HepG2 (cell line): ENCODE measurements at regions of chrX and their contacts with region 1.

Region 1: DNA sequence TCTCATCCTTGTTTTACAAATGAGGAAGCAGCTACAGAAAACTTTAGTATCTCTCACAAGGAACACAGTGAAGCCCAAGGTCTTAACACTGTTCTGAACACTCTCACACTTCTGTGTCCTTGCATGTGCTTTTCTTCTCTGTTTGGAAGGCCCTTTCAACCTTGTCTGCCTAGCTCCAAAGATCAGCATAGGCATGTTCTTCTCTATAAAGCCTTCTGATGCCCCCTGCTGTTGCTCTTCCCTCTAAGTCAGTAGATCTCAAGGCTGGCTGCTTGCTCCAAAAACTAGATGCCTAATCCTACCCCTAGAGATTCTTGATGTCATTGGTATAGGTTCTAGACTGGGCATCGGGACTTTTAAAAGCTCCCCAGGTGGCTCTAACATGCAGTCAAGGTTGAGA is 5.9 kb downstream of the APOO start:
- DNase-seq: peak; percentile 77
- ATAC-seq: peak; percentile 96
- H3K4me3 ChIP-seq: peak overlapping the region in 1 of 3 experiments; percentile 33; a peak in 1 of 6 replicates
- H3K27ac ChIP-seq: peak overlapping the region; percentile 64
- H3K4me1 ChIP-seq: peaks cover 66% of the 10 kb centered on the region
- H3K27me3 ChIP-seq: no peaks in the 10 kb centered on the region
- CTCF ChIP-seq: peak; percentile 82
- EP300 ChIP-seq: no peak
- POLR2A ChIP-seq: no peak
- RAD21 ChIP-seq: peak; percentile 81

Region 2: GRCh38 chrX:23694606-23695005 is 207.2 kb before region 1 on chrX:
- CTCF ChIA-PET with region 1: interaction called, 32 read pairs
- POLR2A ChIA-PET with region 1: interaction called, 3 read pairs
- in situ Hi-C with region 1: loop called (anchors 5 kb)
- intact Hi-C with region 1: loop called (anchors 1 kb)
- DNase-seq: peak; percentile 39
- ATAC-seq: peak; percentile 81
- H3K4me3 ChIP-seq: no peak overlapping the region
- H3K27ac ChIP-seq: no peak overlapping the region
- H3K4me1 ChIP-seq: no peaks in the 10 kb centered on the region
- H3K27me3 ChIP-seq: no peaks in the 10 kb centered on the region
- CTCF ChIP-seq: peak; percentile 63
- EP300 ChIP-seq: no peak
- POLR2A ChIP-seq: no peak
- RAD21 ChIP-seq: no peak

Region 3: DNA sequence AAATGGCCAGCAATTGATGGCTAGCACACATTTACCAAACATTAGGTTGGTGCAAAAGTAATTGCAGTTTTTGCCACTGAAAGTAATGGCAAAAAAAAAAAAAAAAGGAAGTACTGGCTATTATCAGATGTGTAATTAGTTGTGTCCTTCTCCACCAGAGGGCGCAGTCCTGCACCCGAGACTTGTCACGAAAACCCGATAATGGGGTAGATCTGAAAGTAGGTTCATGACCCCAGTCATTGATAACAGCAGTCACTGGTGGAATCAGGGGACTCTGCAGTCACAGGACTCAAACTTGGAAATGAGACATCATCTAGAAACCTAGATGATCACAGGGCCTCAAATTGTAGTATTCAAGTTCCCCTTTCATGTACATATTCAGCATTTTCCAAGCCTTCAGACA is 145.6 kb before region 1 on chrX:
- CTCF ChIA-PET with region 1: interaction called, 50 read pairs
- POLR2A ChIA-PET with region 1: no interaction called
- in situ Hi-C with region 1: loop called (anchors 5 kb)
- intact Hi-C with region 1: loop called (anchors 1 kb)
- DNase-seq: peak; percentile 37
- ATAC-seq: no peak; the same call in 2 of the 3 replicates
- H3K4me3 ChIP-seq: no peak overlapping the region
- H3K27ac ChIP-seq: no peak overlapping the region
- H3K4me1 ChIP-seq: no peaks in the 10 kb centered on the region
- H3K27me3 ChIP-seq: no peaks in the 10 kb centered on the region
- CTCF ChIP-seq: peak; percentile 64
- EP300 ChIP-seq: no peak
- POLR2A ChIP-seq: no peak
- RAD21 ChIP-seq: no peak

Region 4: DNA sequence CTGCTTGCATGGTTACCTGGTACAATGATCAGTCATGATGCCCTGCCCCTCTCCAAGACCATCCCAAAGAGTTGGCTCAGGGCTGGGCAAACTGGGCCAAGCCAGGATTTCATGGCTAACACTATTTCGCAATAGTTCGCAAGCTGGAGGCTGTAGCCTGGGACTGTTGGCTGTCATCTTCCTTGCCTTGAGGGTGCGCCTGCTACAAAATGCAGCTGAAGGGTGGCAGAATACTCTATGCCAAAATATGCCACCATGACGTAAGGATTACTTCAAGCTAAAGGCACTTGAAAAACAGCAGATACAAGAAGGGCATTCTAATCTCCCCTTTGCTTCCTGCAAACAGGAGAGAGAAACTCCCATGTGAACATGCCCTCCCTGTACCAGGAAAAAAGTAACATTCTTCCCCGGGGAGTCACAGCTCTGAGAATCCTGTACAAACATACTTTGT is 97.8 kb before region 1 on chrX:
- CTCF ChIA-PET with region 1: no interaction called
- POLR2A ChIA-PET with region 1: interaction called, 13 read pairs
- in situ Hi-C with region 1: no loop called
- intact Hi-C with region 1: loop called (anchors 1 kb)
- DNase-seq: peak; percentile 70
- ATAC-seq: peak; percentile 30; the same call in 2 of the 3 replicates
- H3K4me3 ChIP-seq: no peak overlapping the region
- H3K27ac ChIP-seq: peak overlapping the region; percentile 65
- H3K4me1 ChIP-seq: peaks cover 46% of the 10 kb centered on the region
- H3K27me3 ChIP-seq: no peaks in the 10 kb centered on the region
- CTCF ChIP-seq: no peak
- EP300 ChIP-seq: 0 out of 4 replicates have a peak, but pooled peaks of 1 of the 2 experiments have one; percentile 9
- POLR2A ChIP-seq: no peak
- RAD21 ChIP-seq: no peak

Region 5: GRCh38 chrX:23844502-23845138 is 57.2 kb before region 1 on chrX:
- CTCF ChIA-PET with region 1: no interaction called
- POLR2A ChIA-PET with region 1: interaction called, 4 read pairs
- in situ Hi-C with region 1: no loop called
- intact Hi-C with region 1: loop called (anchors 5 kb)
- DNase-seq: peak; percentile 65
- ATAC-seq: peak; percentile 63
- H3K4me3 ChIP-seq: peak overlapping the region in 2 of 3 experiments; percentile 20 to 55; a peak in 3 of 6 replicates
- H3K27ac ChIP-seq: peak overlapping the region; percentile 93
- H3K4me1 ChIP-seq: peaks cover 63% of the 10 kb centered on the region
- H3K27me3 ChIP-seq: no peaks in the 10 kb centered on the region
- CTCF ChIP-seq: no peak
- EP300 ChIP-seq: peak in 1 of 2 experiments; percentile 81; a peak in 2 of 4 replicates
- POLR2A ChIP-seq: no peak
- RAD21 ChIP-seq: no peak